ENCODE measurements at regions of chrX and their contacts with region 1.

Region 1: DNA sequence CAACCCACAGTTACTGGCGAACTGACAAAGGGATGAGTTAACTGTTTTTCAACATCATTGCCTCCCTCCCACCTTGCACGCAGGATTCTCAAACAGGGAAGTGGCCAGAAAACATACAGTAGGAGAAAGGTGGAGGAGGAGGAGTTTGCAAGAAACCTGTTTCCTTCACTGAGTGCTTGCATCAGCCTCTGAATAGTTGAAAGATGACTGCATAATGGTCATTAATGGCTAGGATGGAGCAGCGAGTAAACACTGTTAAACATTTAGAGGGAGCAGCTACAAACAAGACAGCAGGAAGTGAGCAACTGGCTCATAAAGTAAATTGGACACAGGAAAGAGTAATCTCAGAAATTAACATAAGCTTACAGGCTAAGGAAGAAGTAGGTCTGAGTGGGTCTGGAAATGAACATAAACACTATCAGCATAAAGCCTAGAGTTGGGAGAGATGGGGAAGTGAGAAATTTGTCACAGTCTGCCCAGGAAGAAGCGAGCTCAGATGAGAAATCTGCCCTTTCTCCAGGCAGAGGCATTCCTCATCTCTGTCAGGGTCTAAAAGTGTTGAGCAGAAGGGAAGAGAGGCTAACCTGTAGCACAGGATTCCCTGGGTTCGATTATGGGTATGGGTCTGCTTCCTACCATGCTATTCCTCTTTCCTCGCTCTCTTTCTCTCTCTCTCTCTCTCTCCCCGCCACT is 38.6 kb downstream of the TRPC5OS start:
- DNase-seq: no peak
- H3K4me3 ChIP-seq: no peak overlapping the region
- H3K27ac ChIP-seq: no peak overlapping the region
- H3K4me1 ChIP-seq: no peaks in the 10 kb centered on the region
- H3K27me3 ChIP-seq: peaks cover 0 to 67% of the 10 kb centered on the region in 2 donors
- CTCF ChIP-seq: no peak
- POLR2A ChIP-seq: no peak

Region 2: DNA sequence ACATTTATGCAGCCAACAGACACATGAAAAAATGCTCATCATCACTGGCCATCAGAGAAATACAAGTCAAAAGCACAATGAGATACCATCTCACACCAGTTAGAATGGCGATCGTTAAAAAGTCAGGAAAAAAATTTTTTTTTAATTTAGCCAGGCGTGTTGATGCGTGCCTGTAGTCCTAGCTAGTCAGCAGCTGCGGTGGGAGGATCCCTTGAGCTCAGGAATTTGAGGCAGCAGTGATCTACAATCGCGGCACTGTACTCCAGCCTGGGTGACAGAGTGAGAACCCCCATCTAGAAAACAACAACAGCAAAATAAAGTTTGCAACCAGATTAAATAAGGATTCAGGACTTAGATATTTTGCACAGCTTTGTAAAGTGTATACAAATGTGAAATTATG is 299.3 kb before region 1 on chrX:
- intact Hi-C with region 1: loop called (anchors 5 kb)
- DNase-seq: no peak
- H3K4me3 ChIP-seq: no peak overlapping the region
- H3K27ac ChIP-seq: no peak overlapping the region
- H3K4me1 ChIP-seq: no peaks in the 10 kb centered on the region
- H3K27me3 ChIP-seq: peaks cover 0 to 31% of the 10 kb centered on the region in 2 donors
- CTCF ChIP-seq: no peak
- POLR2A ChIP-seq: no peak

Region 3: GRCh38 chrX:111928456-111928855 is 13.9 kb after region 1 on chrX:
- intact Hi-C with region 1: no loop called
- DNase-seq: no peak
- H3K4me3 ChIP-seq: no peak overlapping the region
- H3K27ac ChIP-seq: no peak overlapping the region
- H3K4me1 ChIP-seq: no peaks in the 10 kb centered on the region
- H3K27me3 ChIP-seq: peaks cover 0 to 58% of the 10 kb centered on the region in 2 donors
- CTCF ChIP-seq: no peak
- POLR2A ChIP-seq: no peak

Region 4: DNA sequence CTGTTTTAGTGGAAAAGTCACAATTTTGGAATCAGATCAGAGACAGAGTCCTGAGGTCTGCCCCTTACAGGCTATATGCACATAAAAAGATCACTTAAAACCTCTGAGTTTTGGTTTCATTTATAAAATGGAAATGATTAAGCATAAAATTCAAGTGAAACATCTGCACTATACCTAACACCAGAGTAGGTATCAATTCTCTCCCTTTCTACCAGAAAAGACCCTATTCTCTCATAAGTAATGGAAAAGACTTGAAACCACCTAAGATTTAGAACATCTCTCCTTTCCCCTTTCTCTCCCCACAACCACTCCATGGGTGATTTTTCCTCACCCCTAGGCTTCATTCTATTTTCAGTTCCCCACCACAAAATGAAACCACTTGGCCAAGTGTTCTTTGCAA is 764.3 kb after region 1 on chrX:
- intact Hi-C with region 1: no loop called
- DNase-seq: no peak
- H3K4me3 ChIP-seq: peak overlapping the region in 1 of 3 donors; percentile 63
- H3K27ac ChIP-seq: peak overlapping the region in 1 of 2 donors; percentile 64
- H3K4me1 ChIP-seq: no peaks in the 10 kb centered on the region
- H3K27me3 ChIP-seq: peaks cover 0 to 23% of the 10 kb centered on the region in 2 donors
- CTCF ChIP-seq: no peak
- POLR2A ChIP-seq: no peak

Region 5: DNA sequence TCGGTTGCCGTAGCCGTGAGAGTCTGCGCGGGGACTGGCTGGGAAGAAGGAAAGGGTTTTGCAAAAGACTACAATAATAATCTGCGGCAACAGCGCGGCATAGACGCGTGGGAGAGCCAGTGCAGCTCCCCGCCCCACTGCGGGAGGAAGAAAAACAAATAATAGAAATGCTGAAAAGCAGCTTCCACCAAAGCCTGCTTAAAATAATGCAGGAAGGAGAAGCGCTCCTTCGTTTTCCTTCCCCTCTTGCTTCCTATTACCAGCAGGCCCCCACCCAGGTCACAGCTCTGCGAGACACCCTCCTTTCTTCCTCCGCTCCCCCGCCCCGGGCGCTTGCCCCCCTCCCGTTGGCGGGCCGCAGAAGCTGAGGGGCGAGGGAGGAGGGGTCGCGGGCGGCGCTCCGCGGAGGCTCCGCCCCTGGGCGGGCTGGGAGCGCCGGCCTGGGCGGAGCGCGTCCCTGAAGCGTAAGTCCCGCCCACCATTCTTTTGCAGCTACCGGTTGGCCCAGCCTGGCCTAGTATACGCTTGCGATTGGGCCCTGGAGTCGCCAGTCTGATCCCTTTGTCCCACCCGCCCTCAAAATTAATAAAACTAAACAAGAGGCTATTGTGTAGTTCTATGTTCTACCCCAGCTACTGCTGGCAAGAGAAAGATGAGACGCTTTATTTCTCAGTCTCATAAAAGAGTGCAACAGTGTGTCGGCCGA is 926.7 kb after region 1 on chrX:
- intact Hi-C with region 1: no loop called
- DNase-seq: peak; percentile 65 to 85
- H3K4me3 ChIP-seq: peak overlapping the region; percentile 63 to 76 (median 64)
- H3K27ac ChIP-seq: peak overlapping the region; percentile 79 to 85
- H3K4me1 ChIP-seq: no peaks in the 10 kb centered on the region
- H3K27me3 ChIP-seq: peaks cover 0 to 60% of the 10 kb centered on the region in 2 donors
- CTCF ChIP-seq: no peak
- POLR2A ChIP-seq: no peak

Measured in breast epithelium (tissue), 4 donors.